K562 (cell line): ENCODE measurements at regions of chr11 and their contacts with region 1.

Region 1: DNA sequence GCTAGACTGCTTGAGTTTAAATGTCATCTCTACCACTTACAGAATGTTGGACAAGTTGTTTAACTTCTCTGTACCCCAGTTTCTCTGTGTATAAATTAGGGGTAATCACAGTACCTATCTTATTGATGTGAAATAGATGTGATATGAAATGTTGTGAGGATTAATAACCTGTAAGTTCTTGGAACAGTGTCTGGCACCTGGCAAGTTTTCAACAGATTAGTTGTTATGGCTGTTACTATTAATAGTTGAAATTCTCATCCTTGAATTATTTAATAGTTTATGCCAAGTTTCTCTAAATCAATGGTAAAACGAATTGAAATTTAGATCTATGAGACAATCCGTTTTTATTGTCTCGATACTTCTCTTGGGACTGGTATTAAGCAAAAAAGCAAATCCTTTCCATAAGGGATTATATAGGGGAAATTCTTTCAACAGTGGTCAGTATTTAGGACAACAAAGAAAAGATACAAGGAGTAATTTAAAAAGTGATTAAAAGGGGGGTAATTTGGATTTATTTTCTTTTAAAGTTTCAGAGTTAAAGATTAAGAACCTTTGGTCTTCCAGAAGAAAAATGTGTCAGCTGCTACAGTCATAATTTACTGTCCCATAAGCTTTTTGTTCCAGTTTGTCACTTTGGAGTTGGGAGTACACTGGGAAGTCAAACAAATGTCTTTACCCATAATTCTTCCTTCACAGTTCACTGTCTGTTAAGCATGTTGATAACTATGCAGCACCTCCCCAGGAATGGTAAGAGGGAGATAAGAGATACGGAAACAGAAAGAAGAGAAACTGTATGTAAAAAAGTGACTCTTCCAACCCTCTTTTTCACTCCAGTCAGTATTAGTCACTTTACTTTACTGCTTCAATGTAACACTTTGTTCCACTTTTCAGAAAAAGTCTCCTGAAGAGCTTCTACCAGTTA is 13.2 kb downstream of the PDE3B start:
- DNase-seq: peak; percentile 68 to 88 (median 80)
- ATAC-seq: peak; percentile 88
- H3K4me3 ChIP-seq: no peak overlapping the region
- H3K27ac ChIP-seq: peak overlapping the region; percentile 77
- H3K4me1 ChIP-seq: peaks cover 0 to 37% of the 10 kb centered on the region in 2 experiments; a peak in 4 of 5 replicates
- H3K27me3 ChIP-seq: no peaks in the 10 kb centered on the region
- CTCF ChIP-seq: no peak
- EP300 ChIP-seq: peak; percentile 97
- POLR2A ChIP-seq: no peak
- RAD21 ChIP-seq: peak; percentile 27 to 31; a peak in 2 of 4 replicates

Region 2: DNA sequence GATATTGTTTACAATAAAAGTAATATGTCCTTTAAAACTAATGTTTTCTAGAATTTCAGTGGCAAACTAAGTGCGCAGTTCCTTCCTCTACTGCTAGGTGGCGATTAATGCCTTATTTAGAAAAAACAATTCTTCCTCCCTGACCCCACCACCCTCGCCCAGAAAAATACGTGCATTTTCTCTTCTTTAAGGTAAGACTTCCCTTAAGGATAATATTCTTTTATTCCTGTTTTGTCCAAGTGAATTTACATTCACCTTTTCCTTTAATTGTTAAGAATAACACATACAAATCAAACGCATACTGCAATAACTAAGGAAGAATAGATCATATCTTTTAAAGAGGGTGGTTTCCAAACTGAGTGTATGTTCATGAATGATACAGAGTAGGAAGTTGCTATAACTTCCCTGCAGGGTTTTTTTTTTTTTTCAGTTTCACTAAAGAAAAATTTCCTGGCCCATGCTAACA is 119.6 kb before region 1 on chr11:
- CTCF ChIA-PET with region 1: no interaction called
- POLR2A ChIA-PET with region 1: no interaction called
- in situ Hi-C with region 1: no loop called
- intact Hi-C with region 1: loop called (anchors 5 kb)
- DNase-seq: peak; percentile 54 to 64 (median 61)
- ATAC-seq: peak; percentile 80
- H3K4me3 ChIP-seq: no peak overlapping the region
- H3K27ac ChIP-seq: peak overlapping the region; percentile 14; the same call in 1 of the 3 replicates
- H3K4me1 ChIP-seq: peaks cover 0 to 7% of the 10 kb centered on the region in 2 experiments; a peak in 3 of 5 replicates
- H3K27me3 ChIP-seq: no peaks in the 10 kb centered on the region
- CTCF ChIP-seq: peak; percentile 49 to 84 (median 72); a peak in 5 of 6 replicates
- EP300 ChIP-seq: no peak
- POLR2A ChIP-seq: no peak
- RAD21 ChIP-seq: peak; percentile 58 to 79

Region 3: GRCh38 chr11:14611939-14612338 is 44.9 kb before region 1 on chr11:
- CTCF ChIA-PET with region 1: no interaction called
- POLR2A ChIA-PET with region 1: no interaction called
- in situ Hi-C with region 1: no loop called
- intact Hi-C with region 1: no loop called
- DNase-seq: no peak
- ATAC-seq: no peak
- H3K4me3 ChIP-seq: no peak overlapping the region
- H3K27ac ChIP-seq: no peak overlapping the region
- H3K4me1 ChIP-seq: no peaks in the 10 kb centered on the region
- H3K27me3 ChIP-seq: no peaks in the 10 kb centered on the region
- CTCF ChIP-seq: no peak
- EP300 ChIP-seq: no peak
- POLR2A ChIP-seq: no peak
- RAD21 ChIP-seq: no peak

Region 4: DNA sequence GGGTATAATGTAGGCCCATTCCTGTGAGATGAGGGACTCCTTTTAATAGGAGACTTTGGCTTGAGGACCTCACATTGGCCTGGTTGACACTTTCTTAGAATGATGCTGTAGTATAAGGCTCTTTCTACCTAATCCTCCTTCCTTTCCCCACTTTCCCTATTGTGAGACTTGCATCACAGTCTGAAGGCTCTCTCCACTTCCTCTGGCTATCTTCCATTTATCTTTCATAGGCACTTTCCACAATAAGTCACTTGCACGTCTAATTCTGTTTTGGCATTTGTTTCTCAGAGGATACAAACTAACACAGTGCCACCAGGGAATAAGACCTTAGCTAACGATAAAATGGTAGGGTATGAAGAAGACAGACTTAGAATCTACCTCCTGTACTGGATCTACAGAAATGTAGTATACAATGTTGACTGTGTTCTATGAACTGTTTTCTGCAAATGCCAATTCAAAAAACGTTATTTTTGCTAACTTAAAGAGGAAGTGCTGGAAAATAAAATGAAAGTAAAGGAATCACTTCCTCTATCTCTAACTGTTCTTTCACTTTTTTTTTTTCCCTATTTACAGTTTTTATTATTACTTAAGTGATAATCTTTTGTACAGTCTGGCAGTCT is 31.1 kb before region 1 on chr11:
- CTCF ChIA-PET with region 1: no interaction called
- POLR2A ChIA-PET with region 1: no interaction called
- in situ Hi-C with region 1: no loop called
- intact Hi-C with region 1: no loop called
- DNase-seq: no peak
- ATAC-seq: no peak
- H3K4me3 ChIP-seq: no peak overlapping the region
- H3K27ac ChIP-seq: no peak overlapping the region; the same call in 2 of the 3 replicates
- H3K4me1 ChIP-seq: no peaks in the 10 kb centered on the region
- H3K27me3 ChIP-seq: no peaks in the 10 kb centered on the region
- CTCF ChIP-seq: no peak
- EP300 ChIP-seq: no peak
- POLR2A ChIP-seq: no peak
- RAD21 ChIP-seq: no peak

Region 5: DNA sequence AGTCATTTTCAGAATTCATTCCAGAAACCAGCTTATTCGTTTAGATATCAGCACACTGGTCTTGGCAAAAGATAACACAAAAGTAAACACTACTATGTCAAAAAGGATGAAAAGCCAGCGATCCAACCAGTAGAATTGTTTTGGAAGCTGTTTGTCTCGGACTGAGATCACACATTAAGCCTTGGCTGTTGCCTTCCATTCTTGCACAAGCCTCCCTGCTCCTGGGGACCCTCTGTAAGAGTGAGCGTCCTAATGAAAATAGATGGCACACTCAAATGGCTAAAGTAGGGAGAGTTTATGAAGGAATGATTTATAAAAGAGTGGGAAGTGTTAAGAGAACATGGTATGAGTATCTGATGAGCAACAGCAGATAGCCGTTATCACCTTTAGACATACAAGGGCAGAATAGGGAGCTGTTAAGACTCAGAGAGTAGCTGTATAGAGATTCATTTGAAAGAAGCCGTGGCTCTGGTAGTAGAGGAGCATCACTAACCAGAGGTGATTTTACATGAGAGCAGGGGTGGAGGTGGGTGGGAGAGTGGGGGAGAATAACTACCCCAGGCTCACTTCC is 12.0 kb after region 1 on chr11:
- CTCF ChIA-PET with region 1: no interaction called
- POLR2A ChIA-PET with region 1: interaction called, 19 read pairs
- in situ Hi-C with region 1: no loop called
- intact Hi-C with region 1: no loop called
- DNase-seq: peak; percentile 24 to 64 (median 42)
- ATAC-seq: peak; percentile 87
- H3K4me3 ChIP-seq: 0 out of 2 replicates have a peak overlapping the region, but pooled peaks have one; percentile 2
- H3K27ac ChIP-seq: peak overlapping the region; percentile 76
- H3K4me1 ChIP-seq: peaks cover 0 to 29% of the 10 kb centered on the region in 2 experiments; a peak in 3 of 5 replicates
- H3K27me3 ChIP-seq: no peaks in the 10 kb centered on the region
- CTCF ChIP-seq: no peak
- EP300 ChIP-seq: peak; percentile 14; the same call in 1 of the 2 replicates
- POLR2A ChIP-seq: no peak
- RAD21 ChIP-seq: no peak

Region 6: DNA sequence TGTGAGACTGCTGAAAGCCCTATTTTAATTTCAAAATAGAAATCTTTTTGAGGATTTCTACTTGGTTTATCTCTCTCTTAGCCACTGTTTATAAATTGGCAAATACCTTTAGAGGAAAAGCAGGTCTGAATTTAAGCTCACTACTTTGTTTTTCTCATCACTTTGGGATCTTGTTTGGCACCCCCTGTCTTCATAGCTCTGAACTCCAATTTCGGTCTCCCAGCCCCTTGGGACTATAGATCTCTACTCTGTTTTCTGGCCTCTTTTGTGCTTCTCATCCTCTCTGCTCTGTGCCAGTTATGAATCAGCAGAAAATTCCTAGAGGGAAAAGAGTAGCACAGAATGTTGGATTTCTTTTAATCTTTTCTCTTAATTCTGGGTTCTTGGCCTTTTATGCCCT is 117.0 kb after region 1 on chr11:
- CTCF ChIA-PET with region 1: no interaction called
- POLR2A ChIA-PET with region 1: no interaction called
- in situ Hi-C with region 1: no loop called
- intact Hi-C with region 1: loop called (anchors 5 kb)
- DNase-seq: peak in 1 of 4 experiments; percentile 14
- ATAC-seq: peak; percentile 62; the same call in 2 of the 3 replicates
- H3K4me3 ChIP-seq: no peak overlapping the region
- H3K27ac ChIP-seq: no peak overlapping the region
- H3K4me1 ChIP-seq: no peaks in the 10 kb centered on the region
- H3K27me3 ChIP-seq: no peaks in the 10 kb centered on the region
- CTCF ChIP-seq: peak in 2 of 3 experiments; percentile 26 to 29; a peak in 3 of 6 replicates
- EP300 ChIP-seq: no peak
- POLR2A ChIP-seq: no peak
- RAD21 ChIP-seq: no peak

Region 7: DNA sequence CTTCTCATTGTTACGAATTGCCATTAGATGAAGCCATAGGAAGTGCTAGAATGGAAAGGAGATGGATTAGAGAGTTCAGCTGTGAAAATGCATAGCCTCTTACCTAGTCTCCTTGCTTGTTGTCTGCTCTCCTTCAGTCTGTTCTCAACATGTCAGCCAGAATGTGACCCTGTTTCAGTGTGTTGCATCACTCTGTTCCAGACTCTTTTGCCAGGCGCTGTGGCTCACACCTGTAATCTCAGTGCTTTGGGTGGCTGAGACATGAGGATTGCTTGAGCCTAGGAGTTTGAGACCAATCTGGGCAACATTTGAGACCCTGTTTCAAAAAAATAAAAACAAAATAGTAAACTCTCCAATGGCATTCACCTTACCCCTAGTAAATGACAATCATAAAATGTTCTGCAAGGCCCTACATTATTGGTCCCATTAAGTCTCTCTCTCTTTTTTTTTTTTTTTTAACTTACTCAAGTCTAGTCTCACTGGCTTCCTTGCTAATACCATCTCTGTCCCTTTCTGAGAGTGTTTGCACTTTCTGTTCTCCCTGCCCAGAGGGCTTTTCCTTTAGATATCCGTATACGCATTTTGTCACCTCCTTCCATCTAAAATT is 195.9 kb after region 1 on chr11:
- CTCF ChIA-PET with region 1: no interaction called
- POLR2A ChIA-PET with region 1: no interaction called
- in situ Hi-C with region 1: no loop called
- intact Hi-C with region 1: loop called (anchors 1 kb)
- DNase-seq: peak in 1 of 4 experiments; percentile 23
- ATAC-seq: peak; percentile 98
- H3K4me3 ChIP-seq: no peak overlapping the region
- H3K27ac ChIP-seq: no peak overlapping the region; the same call in 2 of the 3 replicates
- H3K4me1 ChIP-seq: no peaks in the 10 kb centered on the region; a peak in 1 of 5 replicates
- H3K27me3 ChIP-seq: no peaks in the 10 kb centered on the region
- CTCF ChIP-seq: no peak
- EP300 ChIP-seq: peak; percentile 80
- POLR2A ChIP-seq: no peak
- RAD21 ChIP-seq: no peak